Ovary (tissue), 10 donors: ENCODE measurements at regions of chr21 and their contacts with region 1.

Region 1: GRCh38 chr21:29613021-29613420 is 314.3 kb downstream of the BACH1 start:
- DNase-seq: no peak
- H3K4me3 ChIP-seq: no peak overlapping the region
- H3K27ac ChIP-seq: no peak overlapping the region
- H3K4me1 ChIP-seq: no peaks in the 10 kb centered on the region
- H3K27me3 ChIP-seq: no peaks in the 10 kb centered on the region
- CTCF ChIP-seq: no peak
- EP300 ChIP-seq: no peak
- POLR2A ChIP-seq: no peak

Region 2: GRCh38 chr21:29775462-29775861 is 162.4 kb after region 1 on chr21:
- intact Hi-C with region 1: loop called in 1 of 4 experiments (anchors 5 kb)
- DNase-seq: no peak
- H3K4me3 ChIP-seq: no peak overlapping the region
- H3K27ac ChIP-seq: no peak overlapping the region
- H3K4me1 ChIP-seq: peaks cover 4% of the 10 kb centered on the region
- H3K27me3 ChIP-seq: no peaks in the 10 kb centered on the region
- CTCF ChIP-seq: no peak
- EP300 ChIP-seq: no peak
- POLR2A ChIP-seq: no peak